ENCODE measurements at regions of chr3 and their contacts with region 1.

Region 1: GRCh38 chr3:72818092-72818773 is 30.0 kb downstream of the SHQ1 start:
- DNase-seq: no peak
- ATAC-seq: no peak

Region 2: GRCh38 chr3:71702131-71703024 is 1115.9 kb before region 1 on chr3:
- intact Hi-C with region 1: loop called (anchors 10 kb)
- DNase-seq: no peak
- ATAC-seq: no peak

Region 3: GRCh38 chr3:71875461-71875947 is 942.7 kb before region 1 on chr3:
- intact Hi-C with region 1: loop called (anchors 5 kb)
- DNase-seq: peak; percentile 82
- ATAC-seq: peak; percentile 97

Region 4: GRCh38 chr3:71955240-71956068 is 862.8 kb before region 1 on chr3:
- intact Hi-C with region 1: loop called (anchors 10 kb)
- DNase-seq: peak; percentile 76
- ATAC-seq: peak; percentile 91

Region 5: DNA sequence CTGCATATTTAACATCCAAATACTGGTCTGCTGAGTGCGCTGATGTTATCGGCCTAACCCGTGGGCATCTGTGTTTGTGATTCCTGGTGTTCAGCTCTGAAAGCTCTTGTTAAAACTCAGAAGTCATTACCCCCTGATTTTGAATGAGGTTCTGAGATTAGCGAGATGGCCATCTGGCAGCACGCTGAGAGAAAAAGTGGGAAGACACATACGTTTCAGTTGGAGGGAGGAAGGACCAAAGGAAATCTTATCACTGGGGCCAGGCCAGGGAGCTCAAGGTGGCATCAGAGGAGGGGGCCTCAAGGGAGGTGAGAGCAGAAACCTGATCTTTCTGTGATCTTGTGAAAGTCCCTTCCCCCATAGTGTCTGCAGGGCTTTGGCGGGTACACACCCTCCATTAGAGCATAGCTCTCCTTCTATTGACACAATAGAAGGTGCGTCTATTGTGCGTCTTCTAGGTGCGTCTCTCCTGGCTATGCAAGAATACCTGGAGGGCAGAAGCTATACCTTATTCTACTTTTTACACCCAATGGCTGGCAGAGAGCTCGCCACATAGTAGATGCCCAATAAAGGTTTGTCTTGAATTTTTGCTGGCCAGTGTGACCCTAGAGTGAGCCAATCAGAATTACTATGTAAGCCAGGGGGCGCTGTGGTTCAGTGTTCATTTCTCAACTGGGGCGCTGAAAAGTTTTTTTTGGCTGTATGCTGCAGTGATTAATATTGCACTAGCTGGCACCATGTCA is 152.4 kb before region 1 on chr3:
- intact Hi-C with region 1: loop called (anchors 10 kb)
- DNase-seq: no peak
- ATAC-seq: peak; percentile 52

Region 6: DNA sequence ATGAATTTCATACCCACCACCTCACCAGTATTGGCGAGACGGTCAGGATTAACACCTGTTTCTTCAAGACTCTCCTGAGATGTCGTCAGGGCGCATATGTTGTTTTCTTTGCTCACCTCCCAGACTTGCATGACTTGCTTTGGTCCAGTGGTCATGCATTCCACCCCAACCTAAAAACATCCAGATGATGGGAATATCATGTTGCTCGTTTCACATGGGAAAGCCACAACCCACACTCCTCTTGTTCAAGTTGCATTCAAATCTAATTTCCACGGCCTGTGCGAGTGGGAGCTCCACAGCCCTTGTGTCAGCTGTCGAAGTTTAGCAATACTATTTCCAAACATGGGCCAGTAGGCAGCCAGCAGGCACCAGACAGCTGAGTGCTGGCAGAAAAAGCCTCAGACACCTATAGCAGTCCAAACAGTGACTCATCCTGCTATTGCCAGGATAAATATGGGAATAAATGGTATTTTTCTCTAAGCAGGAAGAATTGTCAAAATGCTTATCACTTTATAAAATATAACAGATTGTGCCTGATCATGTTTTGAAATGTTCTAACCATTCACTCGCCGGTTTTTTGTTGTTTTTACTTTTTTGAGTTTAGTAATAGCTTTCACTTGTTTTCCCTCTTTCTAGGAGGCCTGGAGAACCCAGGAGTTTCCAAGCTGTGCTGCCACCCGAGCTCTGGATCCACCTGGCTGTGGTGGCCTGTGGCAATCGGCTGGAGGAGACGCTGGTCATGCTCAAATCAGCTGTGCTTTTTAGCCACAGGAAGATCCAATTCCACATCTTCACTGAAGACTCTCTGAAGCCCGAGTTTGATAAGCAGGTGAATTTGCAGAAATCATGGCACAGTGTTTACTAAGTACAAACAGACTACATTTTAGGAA is 89.7 kb after region 1 on chr3:
- intact Hi-C with region 1: no loop called
- DNase-seq: peak; percentile 62
- ATAC-seq: peak; percentile 92

Region 7: GRCh38 chr3:72938471-72939265 is 120.4 kb after region 1 on chr3:
- intact Hi-C with region 1: no loop called
- DNase-seq: no peak
- ATAC-seq: peak; percentile 91

Region 8: DNA sequence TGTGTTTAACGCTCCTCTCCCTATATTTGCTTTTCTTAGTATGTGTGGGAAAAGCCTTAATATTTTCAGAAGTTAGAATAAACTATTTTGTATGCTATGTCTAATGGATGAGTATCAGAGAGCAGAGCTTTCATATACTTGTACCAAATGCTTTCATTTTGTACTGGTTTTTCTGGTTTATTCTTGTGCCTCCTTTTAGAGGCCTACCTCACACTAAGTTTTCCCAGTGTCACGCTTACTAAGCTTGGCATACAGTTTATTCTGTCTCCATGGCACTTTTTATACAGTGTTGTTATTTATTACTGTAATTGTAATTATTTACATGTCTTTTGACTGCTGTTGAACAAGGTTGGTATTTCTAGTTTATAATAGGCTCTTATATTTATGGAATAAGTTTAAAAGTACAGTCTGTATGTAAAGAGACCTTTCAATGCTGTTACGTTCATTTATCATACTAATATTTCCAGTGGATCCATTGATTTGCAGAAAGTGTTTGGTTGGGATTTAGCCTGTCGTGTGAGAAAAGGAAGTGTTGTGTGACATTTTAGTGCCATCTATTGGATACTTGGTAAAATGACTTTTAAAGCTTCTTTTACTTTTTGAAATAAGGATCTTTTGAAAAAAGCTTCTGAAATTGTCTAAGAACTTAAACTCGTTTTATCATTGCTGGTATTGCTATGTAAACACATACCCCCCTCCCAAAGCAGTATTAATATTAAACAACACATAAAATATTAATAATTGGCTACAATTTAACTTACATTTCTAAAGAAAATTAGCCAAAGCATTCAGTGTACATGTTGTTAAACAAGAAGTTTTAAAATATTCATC is 238.0 kb after region 1 on chr3:
- intact Hi-C with region 1: no loop called
- DNase-seq: no peak
- ATAC-seq: peak; percentile 71

Measured in Right ventricle myocardium superior (tissue), 1 donor.